T-cell (primary cell): ENCODE measurements at regions of chr17 and their contacts with region 1.

Region 1: DNA sequence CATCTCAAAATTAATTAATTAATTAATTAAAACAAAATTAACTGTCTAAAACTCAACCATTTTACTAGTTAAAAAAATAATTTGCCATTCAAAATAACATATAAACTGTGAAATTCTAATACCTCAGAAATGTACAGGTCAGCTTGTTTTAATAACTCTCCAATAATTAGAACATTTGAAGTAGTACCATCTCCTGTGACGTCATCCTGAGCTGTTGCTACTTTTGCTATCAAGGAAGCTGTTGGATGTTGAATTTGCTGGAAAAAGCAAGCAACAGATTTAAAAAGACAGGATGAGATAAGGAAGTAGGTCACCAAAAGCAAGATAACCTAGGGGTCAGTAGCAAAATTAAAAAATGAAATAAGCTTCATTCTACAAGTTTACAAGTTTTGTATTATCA is 2.8 kb downstream of the CCT6B start:
- DNase-seq: no peak
- ATAC-seq: no peak
- H3K4me3 ChIP-seq: no peak overlapping the region
- H3K4me3 Mint-ChIP-seq: no peak overlapping the region
- H3K27ac ChIP-seq: no peak overlapping the region
- H3K27ac Mint-ChIP-seq: no peak overlapping the region
- H3K4me1 ChIP-seq: peaks cover 16 to 20% of the 10 kb centered on the region in 2 experiments
- H3K4me1 Mint-ChIP-seq: peaks cover 28 to 29% (median 28%) of the 10 kb centered on the region in 3 donors
- H3K27me3 ChIP-seq: no peaks in the 10 kb centered on the region
- H3K27me3 Mint-ChIP-seq: peaks cover 0 to 9% of the 10 kb centered on the region in 2 donors

Region 2: GRCh38 chr17:35906923-35907629 is 948.6 kb after region 1 on chr17:
- CTCF ChIA-PET with region 1: no interaction called
- POLR2A ChIA-PET with region 1: interaction called in 1 of 2 experiments, 10 read pairs
- DNase-seq: peak in 1 of 35 experiments; percentile 27
- ATAC-seq: peak in 1 of 4 experiments; percentile 44
- H3K4me3 ChIP-seq: no peak overlapping the region
- H3K4me3 Mint-ChIP-seq: no peak overlapping the region
- H3K27ac ChIP-seq: no peak overlapping the region
- H3K27ac Mint-ChIP-seq: no peak overlapping the region
- H3K4me1 ChIP-seq: peaks cover 0 to 13% of the 10 kb centered on the region in 2 experiments
- H3K4me1 Mint-ChIP-seq: peaks cover 0 to 13% (median 13%) of the 10 kb centered on the region in 3 donors
- H3K27me3 ChIP-seq: no peaks in the 10 kb centered on the region
- H3K27me3 Mint-ChIP-seq: no peaks in the 10 kb centered on the region